Activated naive CD4-positive, alpha-beta T cell treated with anti-CD3 and anti-CD28 coated beads for 36 hours (primary cell): ENCODE measurements at regions of chrX and their contacts with region 1.

Region 1: GRCh38 chrX:72714476-72714916 is 390 bp upstream of the PHKA1 start:
- DNase-seq: peak; percentile 4
- H3K4me3 Mint-ChIP-seq: peak overlapping the region; percentile 67
- H3K27ac Mint-ChIP-seq: peak overlapping the region; percentile 41
- H3K4me1 Mint-ChIP-seq: peaks cover 6% of the 10 kb centered on the region
- H3K27me3 Mint-ChIP-seq: peaks cover 4% of the 10 kb centered on the region

Region 2: GRCh38 chrX:71671043-71671780 is 1043.3 kb before region 1 on chrX:
- CTCF ChIA-PET with region 1: no interaction called
- intact Hi-C with region 1: no loop called
- DNase-seq: peak; percentile 80
- H3K4me3 Mint-ChIP-seq: no peak overlapping the region
- H3K27ac Mint-ChIP-seq: no peak overlapping the region
- H3K4me1 Mint-ChIP-seq: peaks cover 20% of the 10 kb centered on the region
- H3K27me3 Mint-ChIP-seq: peaks cover 3% of the 10 kb centered on the region

Region 3: GRCh38 chrX:72461766-72462165 is 252.7 kb before region 1 on chrX:
- CTCF ChIA-PET with region 1: no interaction called
- intact Hi-C with region 1: no loop called
- DNase-seq: no peak
- H3K4me3 Mint-ChIP-seq: no peak overlapping the region
- H3K27ac Mint-ChIP-seq: no peak overlapping the region
- H3K4me1 Mint-ChIP-seq: no peaks in the 10 kb centered on the region
- H3K27me3 Mint-ChIP-seq: no peaks in the 10 kb centered on the region

Region 4: GRCh38 chrX:72572248-72573157 is 142.0 kb before region 1 on chrX and contains the start of gene HDAC8:
- CTCF ChIA-PET with region 1: no interaction called
- intact Hi-C with region 1: loop called (anchors 1 kb)
- DNase-seq: peak; percentile 66
- H3K4me3 Mint-ChIP-seq: peak within 1 kb of the TSS; percentile 97
- H3K27ac Mint-ChIP-seq: peak within 1 kb of the TSS; percentile 91
- H3K4me1 Mint-ChIP-seq: peaks cover 7% of the 10 kb centered on the region
- H3K27me3 Mint-ChIP-seq: no peaks in the 10 kb centered on the region
- total RNA-seq, gene HDAC8: 14.8 to 16.8 TPM

Region 5: DNA sequence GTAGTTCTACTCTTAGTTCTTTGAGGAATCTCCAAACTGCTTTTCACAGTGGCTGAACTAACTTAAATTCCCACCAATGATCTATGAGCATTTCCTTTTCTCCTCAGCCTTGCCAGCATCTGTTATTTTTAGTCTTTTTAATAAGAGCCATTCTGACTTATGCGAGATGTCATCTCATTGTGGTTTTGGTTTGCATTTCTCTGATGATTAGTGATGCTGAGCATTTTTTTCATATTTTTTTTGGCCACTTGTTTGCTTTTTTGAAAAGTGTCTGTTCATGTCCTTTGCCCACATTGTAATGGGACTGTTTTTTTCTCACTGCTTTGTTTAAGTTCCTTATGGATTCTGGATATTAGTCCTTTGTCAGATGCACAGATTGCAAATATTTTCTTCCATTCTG is 21.1 kb after region 1 on chrX:
- CTCF ChIA-PET with region 1: no interaction called
- intact Hi-C with region 1: no loop called
- DNase-seq: no peak
- H3K4me3 Mint-ChIP-seq: no peak overlapping the region
- H3K27ac Mint-ChIP-seq: no peak overlapping the region
- H3K4me1 Mint-ChIP-seq: no peaks in the 10 kb centered on the region
- H3K27me3 Mint-ChIP-seq: peaks cover 17% of the 10 kb centered on the region

Region 6: DNA sequence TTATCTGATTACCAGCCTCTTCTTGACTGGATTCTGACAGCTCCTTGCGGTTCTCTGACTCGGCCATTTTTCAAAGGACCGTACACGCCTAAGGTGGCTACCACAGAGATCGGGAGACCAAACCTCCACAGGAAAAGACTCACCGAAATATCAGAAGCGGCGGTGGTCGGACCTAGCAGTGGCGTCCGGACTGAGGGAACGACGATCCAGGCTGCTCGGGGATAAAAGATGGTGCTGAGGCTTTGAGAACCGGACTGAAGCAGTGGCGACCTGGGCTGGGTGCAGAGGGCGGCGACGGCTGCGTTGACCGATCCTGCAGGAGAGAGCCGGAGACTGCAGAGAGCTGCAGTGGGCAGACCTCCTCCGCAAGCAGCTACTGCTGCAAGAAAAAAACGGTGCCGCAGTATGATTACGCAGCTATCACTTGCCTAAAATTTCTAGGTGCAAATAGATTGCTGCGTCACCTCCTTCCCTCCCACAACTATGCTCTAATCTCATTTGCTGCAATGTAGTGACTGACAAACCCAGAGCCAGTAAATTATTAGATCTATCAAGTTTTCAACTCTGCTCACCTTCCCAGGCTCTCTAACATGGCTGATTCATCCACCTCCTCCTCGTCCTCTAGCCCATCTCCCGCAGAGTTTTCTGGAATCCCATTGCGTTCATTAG is 500.1 kb after region 1 on chrX and contains the start of gene NAP1L2:
- CTCF ChIA-PET with region 1: no interaction called
- intact Hi-C with region 1: loop called (anchors 5 kb)
- DNase-seq: peak; percentile 59
- H3K4me3 Mint-ChIP-seq: peak within 1 kb of the TSS; percentile 91
- H3K27ac Mint-ChIP-seq: peak within 1 kb of the TSS; percentile 91
- H3K4me1 Mint-ChIP-seq: peaks cover 19% of the 10 kb centered on the region
- H3K27me3 Mint-ChIP-seq: peaks cover 3% of the 10 kb centered on the region
- total RNA-seq, gene NAP1L2: 2.5 to 2.7 TPM

Region 7: DNA sequence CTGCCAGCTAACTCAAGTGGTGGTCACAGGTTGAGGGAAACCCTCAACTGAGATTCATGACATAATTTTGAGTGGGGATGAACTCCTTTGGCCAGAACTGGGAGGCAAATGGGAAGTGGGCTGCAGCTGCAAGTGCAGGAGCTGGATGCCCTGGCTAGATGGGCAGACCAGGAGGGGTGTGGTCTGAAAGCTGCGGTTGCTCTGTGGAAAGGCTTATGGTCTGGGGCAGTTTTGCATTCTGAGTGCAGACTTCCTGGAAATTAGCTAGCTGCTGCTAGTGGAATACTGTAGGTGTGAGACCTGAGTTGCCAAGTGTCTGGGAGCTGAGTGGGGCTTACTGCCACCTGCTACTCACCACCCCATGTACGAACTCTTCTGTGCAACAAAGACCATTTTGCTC is 552.3 kb after region 1 on chrX:
- CTCF ChIA-PET with region 1: no interaction called
- intact Hi-C with region 1: no loop called
- DNase-seq: no peak
- H3K4me3 Mint-ChIP-seq: no peak overlapping the region
- H3K27ac Mint-ChIP-seq: no peak overlapping the region
- H3K4me1 Mint-ChIP-seq: no peaks in the 10 kb centered on the region
- H3K27me3 Mint-ChIP-seq: no peaks in the 10 kb centered on the region